CD14-positive monocyte (primary cell): ENCODE measurements at regions of chr9 and their contacts with region 1.

Region 1: DNA sequence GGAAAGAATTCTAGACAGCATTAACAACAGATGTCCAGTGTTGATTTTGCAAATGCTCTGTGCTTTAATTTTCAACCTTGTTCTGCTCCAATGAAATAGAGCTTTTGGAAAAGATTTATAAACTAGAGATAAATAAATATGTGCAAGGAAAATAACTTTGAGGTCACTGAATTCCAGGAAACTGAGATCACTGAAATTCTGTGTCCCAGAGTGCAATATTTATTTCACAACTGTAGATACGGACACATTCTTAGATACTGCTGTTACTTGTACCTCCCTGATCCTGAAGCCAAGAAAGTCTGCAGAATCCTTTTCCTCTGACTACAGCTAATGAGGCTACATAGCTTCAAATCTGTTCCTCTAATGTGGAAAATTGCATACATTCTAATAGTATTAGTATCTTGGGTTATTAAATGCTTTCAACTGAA is 222.9 kb downstream of the DOCK8 start:
- DNase-seq: no peak
- H3K4me3 ChIP-seq: no peak overlapping the region
- H3K4me3 Mint-ChIP-seq: no peak overlapping the region
- H3K27ac ChIP-seq: peak overlapping the region in 1 of 2 donors; percentile 33
- H3K27ac Mint-ChIP-seq: peak overlapping the region in 1 of 7 donors; percentile 43
- H3K4me1 ChIP-seq: no peaks in the 10 kb centered on the region
- H3K4me1 Mint-ChIP-seq: no peaks in the 10 kb centered on the region
- H3K27me3 ChIP-seq: no peaks in the 10 kb centered on the region
- H3K27me3 Mint-ChIP-seq: no peaks in the 10 kb centered on the region
- CTCF ChIP-seq: no peak

Region 2: GRCh38 chr9:336039-336438 is 101.5 kb before region 1 on chr9:
- intact Hi-C with region 1: loop called in 1 of 2 experiments (anchors 10 kb)
- DNase-seq: no peak
- H3K4me3 ChIP-seq: no peak overlapping the region
- H3K4me3 Mint-ChIP-seq: no peak overlapping the region
- H3K27ac ChIP-seq: peak overlapping the region in 1 of 2 donors; percentile 27
- H3K27ac Mint-ChIP-seq: peak overlapping the region in 1 of 7 donors; percentile 37
- H3K4me1 ChIP-seq: no peaks in the 10 kb centered on the region
- H3K4me1 Mint-ChIP-seq: no peaks in the 10 kb centered on the region
- H3K27me3 ChIP-seq: no peaks in the 10 kb centered on the region
- H3K27me3 Mint-ChIP-seq: no peaks in the 10 kb centered on the region
- CTCF ChIP-seq: no peak

Region 3: DNA sequence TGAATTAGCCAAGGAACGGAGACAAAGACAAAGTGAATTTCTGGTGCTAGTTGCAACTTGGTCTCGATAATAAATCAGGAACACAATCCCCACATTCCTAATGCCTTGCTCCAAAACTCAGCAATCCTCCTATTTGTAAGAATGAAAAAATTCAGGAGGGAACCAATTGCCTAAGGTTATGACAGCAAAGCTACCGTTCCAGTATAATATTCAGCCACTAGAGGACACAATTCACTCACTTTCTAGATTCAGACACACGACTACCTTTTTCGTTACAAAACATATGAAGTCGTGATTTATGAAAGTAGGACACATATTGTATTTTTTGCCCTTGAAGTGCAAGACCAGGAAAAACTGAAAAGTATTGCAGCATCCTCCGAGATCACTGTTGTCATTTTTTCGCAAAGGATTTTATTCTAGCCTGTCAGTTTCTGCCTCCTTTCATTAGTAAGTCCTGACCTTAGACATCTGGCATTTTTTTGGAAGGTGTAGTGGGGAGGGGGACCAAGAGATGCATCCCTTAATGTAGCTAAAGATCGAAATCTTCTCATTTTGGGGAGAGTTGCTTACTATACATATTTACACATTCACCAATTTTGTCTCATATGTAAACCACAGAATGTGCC is 89.8 kb before region 1 on chr9:
- intact Hi-C with region 1: no loop called
- DNase-seq: no peak
- H3K4me3 ChIP-seq: no peak overlapping the region
- H3K4me3 Mint-ChIP-seq: no peak overlapping the region
- H3K27ac ChIP-seq: no peak overlapping the region
- H3K27ac Mint-ChIP-seq: peak overlapping the region in 1 of 7 donors; percentile 10
- H3K4me1 ChIP-seq: no peaks in the 10 kb centered on the region
- H3K4me1 Mint-ChIP-seq: no peaks in the 10 kb centered on the region
- H3K27me3 ChIP-seq: no peaks in the 10 kb centered on the region
- H3K27me3 Mint-ChIP-seq: no peaks in the 10 kb centered on the region
- CTCF ChIP-seq: peak; percentile 8

Region 4: GRCh38 chr9:385818-386398 is 51.7 kb before region 1 on chr9:
- intact Hi-C with region 1: loop called in 1 of 2 experiments (anchors 10 kb)
- DNase-seq: no peak
- H3K4me3 ChIP-seq: no peak overlapping the region
- H3K4me3 Mint-ChIP-seq: no peak overlapping the region
- H3K27ac ChIP-seq: no peak overlapping the region
- H3K27ac Mint-ChIP-seq: peak overlapping the region in 1 of 7 donors; percentile 50
- H3K4me1 ChIP-seq: no peaks in the 10 kb centered on the region
- H3K4me1 Mint-ChIP-seq: no peaks in the 10 kb centered on the region
- H3K27me3 ChIP-seq: no peaks in the 10 kb centered on the region
- H3K27me3 Mint-ChIP-seq: no peaks in the 10 kb centered on the region
- CTCF ChIP-seq: peak; percentile 58